Dendritic cell treated with granulocyte-macrophage colony-stimulating factor and Interleukin-4, amounts not matched to agents 40 ng/mL and 50 ng/mL, for 4 days (primary cell): ENCODE measurements at regions of chr15 and their contacts with region 1.

Region 1: DNA sequence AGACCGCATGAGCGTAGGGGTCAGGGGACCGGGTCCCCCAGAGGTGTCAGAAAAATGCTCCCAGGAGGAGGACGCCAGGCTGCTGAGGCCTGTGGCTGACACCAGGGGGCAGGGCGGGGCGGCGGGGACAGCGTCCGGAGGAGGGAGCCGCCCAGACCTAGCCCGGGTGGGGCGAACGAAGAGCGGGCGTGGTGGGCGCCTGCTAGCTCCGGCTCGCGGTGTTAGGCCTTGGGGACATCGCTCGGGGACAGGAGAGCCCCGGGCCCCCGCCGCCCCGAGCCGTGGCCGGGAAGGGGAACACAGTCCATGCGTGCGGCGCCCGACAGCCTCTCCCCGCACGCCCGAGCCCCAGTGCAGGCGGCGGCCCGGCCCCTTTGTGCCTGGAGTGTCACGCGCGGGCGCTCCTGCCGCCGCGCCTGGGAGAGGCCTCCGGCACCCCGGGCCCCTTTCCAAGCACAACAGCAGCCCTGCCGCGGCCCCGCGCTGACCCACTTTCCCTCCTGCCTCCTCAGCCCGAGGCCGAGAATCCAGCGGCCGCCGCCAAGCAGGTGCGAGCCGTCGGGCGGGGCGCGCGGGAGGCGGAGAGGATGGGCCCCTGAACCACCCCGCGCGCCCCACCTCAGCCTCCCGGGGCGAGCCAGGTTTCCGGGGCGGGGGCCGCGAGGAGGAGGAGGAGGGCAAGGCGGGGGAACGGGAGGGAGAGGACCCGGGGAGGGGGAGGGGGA is 111.0 kb upstream of the KLF13 start:
- H3K4me3 Mint-ChIP-seq: peak overlapping the region; percentile 86
- H3K27ac Mint-ChIP-seq: peak overlapping the region; percentile 97
- H3K4me1 Mint-ChIP-seq: peaks cover 71% of the 10 kb centered on the region
- H3K27me3 Mint-ChIP-seq: no peaks in the 10 kb centered on the region

Region 2: GRCh38 chr15:31236184-31237042 is 20.8 kb after region 1 on chr15:
- intact Hi-C with region 1: loop called (anchors 2 kb)
- H3K4me3 Mint-ChIP-seq: no peak overlapping the region
- H3K27ac Mint-ChIP-seq: peak overlapping the region; percentile 68
- H3K4me1 Mint-ChIP-seq: peaks cover 74% of the 10 kb centered on the region
- H3K27me3 Mint-ChIP-seq: no peaks in the 10 kb centered on the region

Region 3: DNA sequence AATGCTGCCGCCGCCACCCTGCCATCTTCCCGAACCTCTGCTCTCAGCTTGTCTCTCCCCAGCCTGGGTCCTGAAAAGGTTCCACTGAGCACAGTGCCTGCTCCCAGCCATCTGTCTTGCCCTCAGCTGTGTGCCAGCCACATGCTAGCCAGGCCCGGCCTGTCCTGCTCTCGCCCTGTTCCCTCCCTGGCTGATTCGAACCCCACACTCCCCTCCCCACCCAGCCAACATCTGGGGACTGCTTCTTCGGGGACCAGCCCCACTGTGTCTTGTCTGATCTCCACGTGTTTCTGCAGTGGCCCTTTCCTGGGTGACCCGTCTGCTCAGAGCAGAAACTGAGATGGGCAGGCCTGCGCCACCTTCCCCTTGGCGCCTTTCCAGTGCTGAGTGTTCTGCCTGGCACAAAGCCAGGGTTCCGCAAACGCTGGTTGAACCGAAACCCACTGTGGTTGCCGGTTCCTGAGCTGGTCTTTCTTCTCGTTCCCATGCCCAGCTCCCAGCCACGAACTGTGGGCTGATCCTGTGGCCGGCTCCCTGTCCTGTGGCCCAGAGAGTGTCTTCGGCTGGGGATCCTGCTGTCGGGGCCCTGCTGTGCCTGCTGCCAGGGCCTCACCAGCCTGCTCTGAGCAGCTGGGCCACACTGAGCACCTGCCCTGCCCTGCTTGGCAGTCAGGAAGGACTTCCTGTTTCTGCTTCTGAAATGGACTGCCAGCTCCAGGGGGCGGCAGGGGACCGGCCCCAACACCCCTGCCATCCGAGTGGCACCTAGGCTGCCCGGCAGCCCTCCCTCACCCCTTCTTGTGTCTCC is 48.3 kb after region 1 on chr15:
- intact Hi-C with region 1: loop called (anchors 1 kb)
- H3K4me3 Mint-ChIP-seq: peak overlapping the region; percentile 17
- H3K27ac Mint-ChIP-seq: peak overlapping the region; percentile 95
- H3K4me1 Mint-ChIP-seq: peaks cover 100% of the 10 kb centered on the region
- H3K27me3 Mint-ChIP-seq: no peaks in the 10 kb centered on the region

Region 4: GRCh38 chr15:31326156-31326732 is 110.6 kb after region 1 on chr15:
- intact Hi-C with region 1: loop called (anchors 1 kb)
- H3K4me3 Mint-ChIP-seq: peak overlapping the region; percentile 94
- H3K27ac Mint-ChIP-seq: peak overlapping the region; percentile 97
- H3K4me1 Mint-ChIP-seq: peaks cover 59% of the 10 kb centered on the region
- H3K27me3 Mint-ChIP-seq: no peaks in the 10 kb centered on the region

Region 5: GRCh38 chr15:31488426-31489204 is 273.0 kb after region 1 on chr15:
- intact Hi-C with region 1: loop called (anchors 2 kb)
- H3K4me3 Mint-ChIP-seq: no peak overlapping the region
- H3K27ac Mint-ChIP-seq: peak overlapping the region; percentile 15
- H3K4me1 Mint-ChIP-seq: peaks cover 25% of the 10 kb centered on the region
- H3K27me3 Mint-ChIP-seq: peaks cover 45% of the 10 kb centered on the region